ENCODE measurements at regions of chr9 and their contacts with region 1.

Region 1: DNA sequence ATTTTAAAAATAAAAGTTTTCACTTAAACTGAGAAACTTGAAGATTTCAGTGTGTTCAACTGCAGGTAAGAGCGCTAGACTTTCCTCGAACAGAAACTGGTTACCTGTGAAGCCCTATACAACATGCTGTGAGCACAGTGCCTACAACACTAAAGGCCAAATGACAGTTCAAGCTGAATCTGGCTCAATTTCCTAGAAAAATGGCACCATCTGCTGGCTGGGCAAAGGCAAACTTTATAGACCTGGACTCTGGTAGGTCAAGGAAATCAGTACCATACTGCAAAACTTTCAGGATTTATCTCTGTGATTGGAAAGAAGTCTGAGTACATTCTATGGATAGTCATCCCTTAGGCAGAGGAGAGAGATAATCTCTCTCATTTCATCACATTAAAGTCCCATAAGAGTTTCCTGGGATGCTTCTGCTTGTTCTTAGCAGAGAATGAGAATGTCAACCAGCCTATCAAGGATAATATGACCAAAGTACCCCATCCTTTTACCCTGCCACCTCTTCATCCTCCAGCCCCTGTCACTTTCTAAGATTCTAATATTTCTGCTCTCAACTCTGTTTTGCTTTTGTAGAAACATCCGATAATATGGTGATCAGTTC is 31.8 kb upstream of the FOXB2 start:
- DNase-seq: no peak
- H3K4me3 ChIP-seq: no peak overlapping the region
- H3K27ac ChIP-seq: no peak overlapping the region
- H3K4me1 ChIP-seq: peaks cover 0 to 4% (median 0%) of the 10 kb centered on the region in 4 donors
- H3K27me3 ChIP-seq: no peaks in the 10 kb centered on the region
- CTCF ChIP-seq: peak; percentile 58 to 61 (median 60)
- EP300 ChIP-seq: no peak
- POLR2A ChIP-seq: no peak

Region 2: DNA sequence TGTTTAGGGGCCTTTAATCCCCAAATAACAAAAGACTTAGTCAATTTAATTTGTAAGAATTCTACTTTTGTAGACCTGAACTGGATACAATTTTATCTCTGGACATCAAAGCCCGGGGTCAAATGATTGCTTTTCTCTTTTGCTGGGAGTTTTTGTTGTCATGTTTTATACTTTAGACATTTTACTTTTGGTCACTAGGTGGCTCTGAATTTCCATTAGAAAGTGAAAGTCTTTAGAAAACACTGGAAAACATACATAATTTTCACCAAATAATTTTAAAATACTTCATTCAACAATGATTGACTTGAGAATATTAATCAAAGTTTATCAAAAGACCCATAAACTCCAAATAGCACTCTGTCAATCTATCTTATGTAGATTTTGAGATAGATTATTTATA is 226.2 kb before region 1 on chr9:
- intact Hi-C with region 1: loop called (anchors 5 kb)
- DNase-seq: no peak
- H3K4me3 ChIP-seq: no peak overlapping the region
- H3K27ac ChIP-seq: no peak overlapping the region
- H3K4me1 ChIP-seq: peaks cover 0 to 39% (median 22%) of the 10 kb centered on the region in 4 donors
- H3K27me3 ChIP-seq: no peaks in the 10 kb centered on the region
- CTCF ChIP-seq: peak in 1 of 3 experiments; percentile 37
- EP300 ChIP-seq: no peak
- POLR2A ChIP-seq: no peak

Region 3: GRCh38 chr9:76808636-76809035 is 179.1 kb before region 1 on chr9:
- intact Hi-C with region 1: loop called (anchors 5 kb)
- DNase-seq: no peak
- H3K4me3 ChIP-seq: no peak overlapping the region
- H3K27ac ChIP-seq: peak overlapping the region in 2 of 4 donors; percentile 22 to 31
- H3K4me1 ChIP-seq: peaks cover 0 to 40% (median 35%) of the 10 kb centered on the region in 4 donors
- H3K27me3 ChIP-seq: no peaks in the 10 kb centered on the region
- CTCF ChIP-seq: no peak
- EP300 ChIP-seq: no peak
- POLR2A ChIP-seq: no peak

Region 4: DNA sequence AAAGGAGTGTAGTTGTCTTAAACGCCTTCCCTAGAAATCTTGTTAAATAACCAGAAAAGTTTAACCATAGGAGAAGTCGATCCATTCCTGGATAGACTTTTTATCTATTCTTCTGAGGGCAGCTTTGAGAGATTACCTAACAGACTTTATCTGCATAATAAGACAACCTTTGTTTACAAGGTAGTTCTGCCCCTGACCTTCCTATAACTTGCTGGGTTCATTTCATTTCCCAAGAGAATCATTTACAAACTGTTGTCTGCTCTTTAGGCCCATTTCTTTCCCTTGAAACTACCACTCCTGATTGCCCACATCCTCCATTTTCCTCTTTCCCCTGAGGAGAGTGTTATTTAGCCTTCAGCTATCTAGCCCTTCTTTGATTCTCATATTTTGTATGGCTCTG is 123.7 kb after region 1 on chr9:
- intact Hi-C with region 1: no loop called
- DNase-seq: no peak
- H3K4me3 ChIP-seq: no peak overlapping the region
- H3K27ac ChIP-seq: no peak overlapping the region
- H3K4me1 ChIP-seq: no peaks in the 10 kb centered on the region
- H3K27me3 ChIP-seq: no peaks in the 10 kb centered on the region
- CTCF ChIP-seq: no peak
- EP300 ChIP-seq: no peak
- POLR2A ChIP-seq: no peak